ENCODE measurements at regions of chr19 and their contacts with region 1.

Region 1: DNA sequence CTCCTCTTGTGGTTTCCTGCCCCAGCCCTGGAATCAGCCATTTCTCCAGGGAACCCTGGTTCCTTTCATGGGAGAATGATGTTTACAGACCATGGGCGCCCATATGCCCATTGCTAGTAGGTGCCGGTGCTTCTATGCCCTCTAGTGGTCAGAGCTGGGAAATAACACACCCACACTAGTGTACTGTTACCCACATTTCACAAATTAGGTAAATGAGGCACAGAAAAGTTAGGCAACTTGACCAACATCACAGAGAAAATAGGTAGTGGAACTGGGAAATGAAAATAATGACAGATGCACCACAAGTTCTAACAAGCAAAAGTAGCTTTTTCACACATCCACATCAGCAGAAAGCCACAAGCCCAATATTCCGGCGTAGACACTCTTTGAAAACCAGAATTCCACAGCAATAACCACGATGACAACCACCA is 1.3 kb upstream of the CEACAM3 start:
- DNase-seq: peak; percentile 49 to 70
- ATAC-seq: peak; percentile 61 to 89
- H3K4me3 ChIP-seq: no peak overlapping the region
- H3K27ac ChIP-seq: no peak overlapping the region
- H3K4me1 ChIP-seq: 0 out of 3 replicates have a peak, but pooled peaks cover 11% of the 10 kb centered on the region
- CTCF ChIP-seq: peak; percentile 96
- EP300 ChIP-seq: no peak
- POLR2A ChIP-seq: no peak
- RAD21 ChIP-seq: peak; percentile 32 to 47; a peak in 4 of 5 replicates

Region 2: DNA sequence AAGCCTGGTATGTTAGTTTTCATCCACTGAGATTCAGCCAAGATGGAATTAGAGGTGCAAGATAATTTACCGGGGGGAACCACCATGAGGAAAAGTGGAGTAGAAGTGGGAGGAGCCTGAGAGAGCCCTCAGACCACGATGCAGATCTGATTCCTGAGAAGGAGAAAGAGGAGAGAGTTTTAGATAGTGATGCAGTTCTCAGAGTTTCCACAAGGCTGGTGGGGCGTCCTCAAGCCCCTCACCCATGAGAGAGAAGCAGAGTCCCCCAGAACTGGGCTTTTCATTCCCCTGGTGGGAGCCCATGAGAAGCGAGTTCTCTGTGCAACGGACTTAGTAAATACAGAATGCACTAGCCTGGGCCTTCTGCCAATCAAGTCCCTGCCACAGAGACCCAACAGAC is 68.6 kb before region 1 on chr19:
- CTCF ChIA-PET with region 1: interaction called, 19 read pairs
- POLR2A ChIA-PET with region 1: no interaction called
- DNase-seq: no peak
- ATAC-seq: peak in 1 of 2 experiments; percentile 43; a peak in 2 of 6 replicates
- H3K4me3 ChIP-seq: no peak overlapping the region
- H3K27ac ChIP-seq: no peak overlapping the region
- H3K4me1 ChIP-seq: no peaks in the 10 kb centered on the region
- CTCF ChIP-seq: no peak
- EP300 ChIP-seq: no peak
- POLR2A ChIP-seq: no peak
- RAD21 ChIP-seq: no peak

Region 3: GRCh38 chr19:41775360-41775695 is 19.7 kb before region 1 on chr19:
- CTCF ChIA-PET with region 1: interaction called, 277 read pairs
- POLR2A ChIA-PET with region 1: no interaction called
- DNase-seq: peak in 1 of 2 experiments; percentile 50
- ATAC-seq: no peak
- H3K4me3 ChIP-seq: no peak overlapping the region
- H3K27ac ChIP-seq: no peak overlapping the region
- H3K4me1 ChIP-seq: peaks cover 5% of the 10 kb centered on the region; the same call in 2 of the 3 replicates
- CTCF ChIP-seq: no peak
- EP300 ChIP-seq: no peak
- POLR2A ChIP-seq: no peak
- RAD21 ChIP-seq: no peak

Region 4: GRCh38 chr19:41837981-41838708 is 43.1 kb after region 1 on chr19:
- CTCF ChIA-PET with region 1: interaction called, 157 read pairs
- POLR2A ChIA-PET with region 1: no interaction called
- DNase-seq: no peak
- ATAC-seq: peak; percentile 7 to 20; a peak in 4 of 6 replicates
- H3K4me3 ChIP-seq: no peak overlapping the region
- H3K27ac ChIP-seq: no peak overlapping the region
- H3K4me1 ChIP-seq: no peaks in the 10 kb centered on the region
- CTCF ChIP-seq: no peak
- EP300 ChIP-seq: no peak
- POLR2A ChIP-seq: no peak
- RAD21 ChIP-seq: no peak

Region 5: GRCh38 chr19:41844601-41845000 is 49.6 kb after region 1 on chr19 and contains the start of gene LYPD4:
- CTCF ChIA-PET with region 1: interaction called, 157 read pairs
- POLR2A ChIA-PET with region 1: no interaction called
- DNase-seq: peak in 1 of 2 experiments; percentile 58
- ATAC-seq: peak; percentile 20 to 68; a peak in 4 of 6 replicates
- H3K4me3 ChIP-seq: no peak within 1 kb of the TSS
- H3K27ac ChIP-seq: no peak within 1 kb of the TSS
- H3K4me1 ChIP-seq: no peaks in the 10 kb centered on the region
- CTCF ChIP-seq: no peak
- EP300 ChIP-seq: no peak
- POLR2A ChIP-seq: no peak
- RAD21 ChIP-seq: no peak
- polyA plus RNA-seq, gene LYPD4: not detected in 2 replicates

Region 6: GRCh38 chr19:41853344-41854167 is 58.5 kb after region 1 on chr19:
- CTCF ChIA-PET with region 1: interaction called, 12 read pairs
- POLR2A ChIA-PET with region 1: no interaction called
- DNase-seq: no peak
- ATAC-seq: no peak; a peak in 1 of 6 replicates
- H3K4me3 ChIP-seq: no peak overlapping the region
- H3K27ac ChIP-seq: no peak overlapping the region
- H3K4me1 ChIP-seq: no peaks in the 10 kb centered on the region
- CTCF ChIP-seq: no peak
- EP300 ChIP-seq: no peak
- POLR2A ChIP-seq: no peak
- RAD21 ChIP-seq: no peak

Region 7: DNA sequence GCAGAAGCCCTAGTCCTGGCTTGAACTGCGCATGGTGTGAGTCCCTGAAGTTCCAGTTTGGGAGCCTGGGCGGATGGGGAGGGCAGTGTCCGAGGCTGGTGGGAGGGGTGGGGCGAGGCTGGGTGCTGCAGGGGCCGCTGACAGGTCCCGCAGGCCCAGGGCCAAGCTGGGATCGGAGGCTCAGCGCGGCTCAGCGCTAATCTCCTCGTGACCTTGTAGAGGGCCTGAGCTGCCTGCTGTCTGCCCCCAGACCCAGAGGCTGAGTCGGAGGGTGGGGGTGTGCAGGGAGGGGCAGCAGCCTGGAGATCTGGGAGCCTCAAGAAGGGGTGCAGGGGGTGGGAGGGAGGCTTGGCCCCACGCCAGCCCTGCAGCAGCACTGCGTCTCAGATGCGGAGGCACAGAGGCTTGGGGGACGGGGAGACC is 196.0 kb after region 1 on chr19:
- CTCF ChIA-PET with region 1: no interaction called
- POLR2A ChIA-PET with region 1: no interaction called
- DNase-seq: peak in 1 of 2 experiments; percentile 51
- ATAC-seq: peak; percentile 10 to 22; a peak in 4 of 6 replicates
- H3K4me3 ChIP-seq: no peak overlapping the region
- H3K27ac ChIP-seq: no peak overlapping the region
- H3K4me1 ChIP-seq: peaks cover 9% of the 10 kb centered on the region; the same call in 1 of the 3 replicates
- CTCF ChIP-seq: no peak
- EP300 ChIP-seq: no peak
- POLR2A ChIP-seq: no peak
- RAD21 ChIP-seq: no peak

Measured in A549 (cell line).